ENCODE measurements at regions of chr1 and their contacts with region 1.

Region 1: DNA sequence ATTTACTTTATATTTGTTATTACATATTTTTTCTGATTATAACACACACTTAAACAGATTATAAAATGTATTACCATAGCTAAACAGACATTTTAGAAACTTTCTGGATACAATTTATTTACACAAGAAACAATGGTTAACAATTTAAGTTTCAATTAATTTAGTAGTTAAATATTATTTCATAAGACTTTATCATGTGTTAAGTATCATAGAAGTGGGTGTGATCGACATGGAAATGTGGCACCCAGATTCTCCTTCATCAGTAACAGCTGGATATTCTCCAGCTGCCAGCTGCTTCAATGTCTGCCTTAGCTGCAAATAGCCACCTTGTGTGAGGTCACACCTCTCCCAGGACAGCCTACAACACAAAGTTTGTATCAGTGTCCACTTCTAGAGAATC is 97.8 kb downstream of the KCNT2 start:
- DNase-seq: no peak
- H3K4me3 ChIP-seq: no peak overlapping the region
- H3K27ac ChIP-seq: no peak overlapping the region
- H3K4me1 ChIP-seq: no peaks in the 10 kb centered on the region
- CTCF ChIP-seq: no peak

Region 2: GRCh38 chr1:196302981-196303380 is 207.5 kb before region 1 on chr1:
- CTCF ChIA-PET with region 1: no interaction called
- POLR2A ChIA-PET with region 1: no interaction called
- intact Hi-C with region 1: no loop called
- DNase-seq: no peak
- H3K4me3 ChIP-seq: no peak overlapping the region
- H3K27ac ChIP-seq: no peak overlapping the region
- H3K4me1 ChIP-seq: no peaks in the 10 kb centered on the region
- CTCF ChIP-seq: no peak

Region 3: DNA sequence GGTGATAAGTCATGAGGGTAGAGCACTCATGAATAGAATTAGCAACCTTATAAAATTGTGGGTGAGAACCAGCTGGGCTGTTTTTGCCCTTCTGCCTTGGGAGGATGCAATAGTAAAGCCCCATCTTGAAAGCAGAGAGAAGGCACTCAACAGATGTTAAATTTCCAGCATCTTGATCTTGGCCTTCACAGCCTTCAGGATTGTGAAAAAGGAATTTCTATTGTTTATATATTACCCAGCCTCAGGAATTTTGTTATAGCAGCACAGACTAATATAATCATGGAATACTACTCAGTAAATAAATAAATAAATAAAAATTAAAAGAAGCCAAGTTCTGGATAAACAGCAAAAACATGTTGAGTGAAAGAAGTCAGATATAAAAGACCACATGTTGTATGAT is 77.5 kb before region 1 on chr1:
- CTCF ChIA-PET with region 1: no interaction called
- POLR2A ChIA-PET with region 1: no interaction called
- intact Hi-C with region 1: no loop called
- DNase-seq: no peak
- H3K4me3 ChIP-seq: no peak overlapping the region
- H3K27ac ChIP-seq: no peak overlapping the region
- H3K4me1 ChIP-seq: no peaks in the 10 kb centered on the region
- CTCF ChIP-seq: no peak

Region 4: DNA sequence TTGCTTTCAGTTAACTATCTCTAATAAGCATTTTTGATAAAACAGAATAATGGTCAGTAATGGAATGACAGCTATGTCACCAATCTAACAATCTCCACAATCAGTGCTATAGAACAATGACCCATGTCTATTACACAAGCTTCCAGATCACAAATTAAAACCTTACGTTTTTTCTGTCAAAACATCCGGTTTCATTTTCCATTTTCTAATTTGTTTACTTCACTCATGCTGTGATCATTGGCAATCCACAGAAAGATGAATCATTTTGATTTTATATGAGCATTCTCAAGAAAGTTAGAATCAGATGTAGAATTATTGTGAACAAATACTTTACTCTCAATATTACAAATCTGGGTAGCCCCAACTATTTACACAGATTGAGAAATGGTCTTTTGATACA is 17.5 kb after region 1 on chr1:
- CTCF ChIA-PET with region 1: no interaction called
- POLR2A ChIA-PET with region 1: interaction called, 13 read pairs
- intact Hi-C with region 1: no loop called
- DNase-seq: no peak
- H3K4me3 ChIP-seq: no peak overlapping the region
- H3K27ac ChIP-seq: no peak overlapping the region
- H3K4me1 ChIP-seq: no peaks in the 10 kb centered on the region
- CTCF ChIP-seq: no peak

Region 5: DNA sequence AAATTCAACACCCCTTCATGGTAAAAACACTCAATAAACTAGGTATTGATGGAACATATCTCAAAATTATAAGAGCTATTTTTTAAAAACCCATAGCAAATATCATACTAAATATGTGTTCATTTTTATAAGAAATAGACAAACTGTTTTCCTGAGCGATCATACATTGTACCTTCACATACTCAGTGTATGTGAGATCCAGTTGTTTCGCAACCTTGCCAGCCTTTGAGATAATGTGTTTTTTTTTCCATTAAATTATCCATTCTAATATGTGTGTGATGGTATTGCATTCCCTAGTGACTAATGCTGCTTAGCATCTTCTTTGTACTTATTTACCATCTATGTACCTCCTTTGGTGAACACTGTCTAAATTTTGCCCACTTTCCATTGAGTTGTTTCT is 188.5 kb after region 1 on chr1:
- CTCF ChIA-PET with region 1: no interaction called
- POLR2A ChIA-PET with region 1: no interaction called
- intact Hi-C with region 1: no loop called
- DNase-seq: no peak
- H3K4me3 ChIP-seq: no peak overlapping the region
- H3K27ac ChIP-seq: no peak overlapping the region
- H3K4me1 ChIP-seq: no peaks in the 10 kb centered on the region
- CTCF ChIP-seq: no peak